Activated B cell treated with CpG ODN at 0.5 μM for 24 hours (primary cell): ENCODE measurements at regions of chr17 and their contacts with region 1.

Region 1: DNA sequence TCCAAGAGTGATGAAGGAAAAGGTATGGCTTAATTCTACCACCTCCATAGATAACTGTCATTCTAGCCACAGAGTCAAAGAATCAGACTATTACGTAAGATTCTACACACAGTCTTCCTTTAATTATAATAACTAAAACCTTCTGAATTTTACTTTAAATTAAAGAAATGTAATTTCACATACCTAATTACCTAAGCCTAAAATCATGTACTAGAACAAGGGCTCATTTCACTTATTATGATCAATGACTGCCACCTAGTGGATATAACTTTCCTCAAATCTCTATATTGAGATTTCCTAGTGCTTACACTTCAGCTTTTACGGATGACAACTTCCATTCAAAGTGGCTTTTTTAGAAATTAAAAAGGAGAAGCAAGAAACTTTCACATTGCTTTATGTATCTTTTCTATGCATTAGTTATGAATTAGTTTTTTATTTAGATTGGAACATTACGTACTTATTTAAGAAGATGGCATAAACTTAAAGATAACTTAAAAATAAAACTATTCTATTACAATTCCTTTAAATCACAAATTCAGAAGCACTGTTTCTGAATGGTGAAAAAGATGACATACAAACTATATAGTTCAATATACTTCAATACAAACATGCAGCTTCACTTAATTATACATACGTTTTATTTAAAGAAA is 18.2 kb upstream of the ABCA10 start:
- DNase-seq: no peak
- ATAC-seq: peak; percentile 28
- H3K4me3 Mint-ChIP-seq: no peak overlapping the region
- H3K27ac Mint-ChIP-seq: no peak overlapping the region
- H3K4me1 Mint-ChIP-seq: no peaks in the 10 kb centered on the region
- H3K27me3 Mint-ChIP-seq: no peaks in the 10 kb centered on the region
- CTCF ChIP-seq: peak; percentile 66

Region 2: GRCh38 chr17:67959288-67959900 is 1287.5 kb before region 1 on chr17:
- CTCF ChIA-PET with region 1: no interaction called
- POLR2A ChIA-PET with region 1: no interaction called
- intact Hi-C with region 1: loop called (anchors 2 kb)
- DNase-seq: no peak
- ATAC-seq: no peak
- H3K4me3 Mint-ChIP-seq: no peak overlapping the region
- H3K27ac Mint-ChIP-seq: no peak overlapping the region
- H3K4me1 Mint-ChIP-seq: peaks cover 3% of the 10 kb centered on the region
- H3K27me3 Mint-ChIP-seq: no peaks in the 10 kb centered on the region
- CTCF ChIP-seq: no peak

Region 3: DNA sequence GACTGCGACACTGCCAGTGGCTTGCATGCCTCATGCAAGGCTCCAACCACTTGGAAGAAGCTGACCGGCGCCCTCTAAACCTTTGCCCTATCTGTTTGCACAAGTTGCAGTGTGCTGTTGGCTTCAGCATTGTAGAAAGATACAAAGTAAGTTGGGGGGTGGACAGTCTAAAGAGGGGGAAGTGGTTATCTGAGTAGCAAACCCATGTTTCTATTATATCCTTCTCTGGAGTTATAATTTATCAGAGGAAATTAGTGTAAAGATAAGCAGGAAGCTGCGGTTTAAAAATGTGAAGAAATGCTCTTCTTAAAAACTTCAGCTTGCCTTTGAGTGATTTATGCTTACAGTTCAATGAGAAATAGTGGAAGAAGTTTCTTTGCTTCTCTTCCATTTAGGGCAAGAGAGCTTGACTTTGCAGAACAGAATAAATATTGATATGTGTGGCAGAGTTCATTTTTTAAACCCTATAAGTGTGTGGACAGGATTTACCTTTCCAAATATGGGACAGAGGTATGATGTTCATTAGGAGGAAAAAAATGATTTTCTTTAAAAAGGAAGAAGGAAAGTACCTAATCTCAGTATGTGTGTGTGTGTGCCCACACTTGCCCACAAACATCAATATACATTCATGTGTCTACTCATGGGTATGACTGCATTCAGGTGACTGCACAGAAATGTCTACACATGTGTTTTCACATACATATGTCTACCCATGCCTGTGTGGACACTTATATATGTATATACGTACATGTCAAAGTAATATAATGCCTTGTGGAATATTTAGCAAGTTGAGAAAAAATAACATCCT is 990.9 kb before region 1 on chr17:
- CTCF ChIA-PET with region 1: no interaction called
- POLR2A ChIA-PET with region 1: no interaction called
- intact Hi-C with region 1: loop called (anchors 10 kb)
- DNase-seq: no peak
- ATAC-seq: no peak
- H3K4me3 Mint-ChIP-seq: peak overlapping the region; percentile 16
- H3K27ac Mint-ChIP-seq: peak overlapping the region; percentile 89
- H3K4me1 Mint-ChIP-seq: peaks cover 83% of the 10 kb centered on the region
- H3K27me3 Mint-ChIP-seq: no peaks in the 10 kb centered on the region
- CTCF ChIP-seq: no peak

Region 4: DNA sequence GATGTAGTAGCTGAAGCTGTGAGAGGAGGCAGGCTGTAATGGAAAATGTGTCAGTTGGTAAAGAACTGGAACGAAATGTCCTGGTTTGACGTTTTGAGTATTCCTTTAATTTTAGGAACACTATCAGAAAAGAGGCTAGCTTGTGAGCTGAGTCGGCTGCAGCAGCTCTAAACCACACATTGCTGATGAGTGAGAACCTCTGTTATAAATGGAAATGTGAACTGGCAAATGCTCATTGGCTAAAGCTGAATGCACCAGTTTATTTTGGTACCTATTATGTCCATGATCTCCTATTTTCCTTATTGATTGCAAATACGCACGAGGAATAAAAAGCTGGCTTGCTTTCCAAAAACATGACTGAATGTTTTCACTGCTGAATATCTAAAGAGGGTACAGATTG is 778.5 kb before region 1 on chr17:
- CTCF ChIA-PET with region 1: interaction called, 4 read pairs
- POLR2A ChIA-PET with region 1: no interaction called
- intact Hi-C with region 1: loop called (anchors 5 kb)
- DNase-seq: no peak
- ATAC-seq: no peak
- H3K4me3 Mint-ChIP-seq: no peak overlapping the region
- H3K27ac Mint-ChIP-seq: no peak overlapping the region
- H3K4me1 Mint-ChIP-seq: peaks cover 5% of the 10 kb centered on the region
- H3K27me3 Mint-ChIP-seq: no peaks in the 10 kb centered on the region
- CTCF ChIP-seq: no peak

Region 5: GRCh38 chr17:68539548-68540467 is 707.0 kb before region 1 on chr17:
- CTCF ChIA-PET with region 1: interaction called, 3 read pairs
- POLR2A ChIA-PET with region 1: no interaction called
- intact Hi-C with region 1: loop called (anchors 1 kb)
- DNase-seq: no peak
- ATAC-seq: peak; percentile 72
- H3K4me3 Mint-ChIP-seq: no peak overlapping the region
- H3K27ac Mint-ChIP-seq: peak overlapping the region; percentile 61
- H3K4me1 Mint-ChIP-seq: peaks cover 15% of the 10 kb centered on the region
- H3K27me3 Mint-ChIP-seq: no peaks in the 10 kb centered on the region
- CTCF ChIP-seq: no peak

Region 6: GRCh38 chr17:68771867-68772515 is 474.9 kb before region 1 on chr17:
- CTCF ChIA-PET with region 1: interaction called, 44 read pairs
- POLR2A ChIA-PET with region 1: no interaction called
- intact Hi-C with region 1: loop called (anchors 1 kb)
- DNase-seq: no peak
- ATAC-seq: peak; percentile 79
- H3K4me3 Mint-ChIP-seq: peak overlapping the region; percentile 70
- H3K27ac Mint-ChIP-seq: peak overlapping the region; percentile 69
- H3K4me1 Mint-ChIP-seq: peaks cover 20% of the 10 kb centered on the region
- H3K27me3 Mint-ChIP-seq: no peaks in the 10 kb centered on the region
- CTCF ChIP-seq: peak; percentile 17

Region 7: GRCh38 chr17:68777243-68777855 is 469.5 kb before region 1 on chr17:
- CTCF ChIA-PET with region 1: interaction called, 44 read pairs
- POLR2A ChIA-PET with region 1: no interaction called
- intact Hi-C with region 1: loop called (anchors 1 kb)
- DNase-seq: no peak
- ATAC-seq: no peak
- H3K4me3 Mint-ChIP-seq: no peak overlapping the region
- H3K27ac Mint-ChIP-seq: no peak overlapping the region
- H3K4me1 Mint-ChIP-seq: peaks cover 18% of the 10 kb centered on the region
- H3K27me3 Mint-ChIP-seq: no peaks in the 10 kb centered on the region
- CTCF ChIP-seq: peak; percentile 35

Region 8: DNA sequence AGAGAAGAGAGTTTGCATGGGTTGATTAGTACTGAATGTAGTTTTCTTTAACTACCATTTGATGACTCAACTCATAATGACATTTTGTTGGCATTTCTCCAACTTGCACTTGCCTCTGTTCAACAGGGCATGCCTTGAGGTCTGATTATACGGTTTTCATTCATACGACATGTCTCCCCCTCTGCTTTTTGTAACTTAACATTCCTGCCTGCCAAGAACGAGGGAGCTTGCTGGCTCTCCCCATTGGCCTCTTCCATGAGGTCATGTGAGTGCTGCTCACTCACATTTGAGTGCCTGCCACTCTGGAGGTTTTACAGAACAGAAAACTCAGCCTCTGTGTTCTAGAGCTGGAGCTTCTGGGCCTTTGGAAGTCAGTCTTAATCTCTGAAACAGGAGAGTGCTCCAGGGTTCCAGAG is 187.3 kb after region 1 on chr17:
- CTCF ChIA-PET with region 1: no interaction called
- POLR2A ChIA-PET with region 1: no interaction called
- intact Hi-C with region 1: no loop called
- DNase-seq: no peak
- ATAC-seq: no peak
- H3K4me3 Mint-ChIP-seq: no peak overlapping the region
- H3K27ac Mint-ChIP-seq: no peak overlapping the region
- H3K4me1 Mint-ChIP-seq: peaks cover 7% of the 10 kb centered on the region
- H3K27me3 Mint-ChIP-seq: no peaks in the 10 kb centered on the region
- CTCF ChIP-seq: no peak